ENCODE measurements at regions of chr18 and their contacts with region 1.

Region 1: GRCh38 chr18:54357660-54358494 is at the starts of genes C18orf54 and STARD6:
- DNase-seq: peak; percentile 88
- H3K4me3 ChIP-seq: peak within 1 kb of the TSS; percentile 88
- H3K27ac ChIP-seq: peak within 1 kb of the TSS; percentile 82
- H3K4me1 ChIP-seq: peaks cover 21% of the 10 kb centered on the region
- CTCF ChIP-seq: peak; percentile 65
- total RNA-seq, gene C18orf54: 4.9 and 5.4 TPM in 2 replicates
- total RNA-seq, gene STARD6: not detected in 2 replicates

Region 2: DNA sequence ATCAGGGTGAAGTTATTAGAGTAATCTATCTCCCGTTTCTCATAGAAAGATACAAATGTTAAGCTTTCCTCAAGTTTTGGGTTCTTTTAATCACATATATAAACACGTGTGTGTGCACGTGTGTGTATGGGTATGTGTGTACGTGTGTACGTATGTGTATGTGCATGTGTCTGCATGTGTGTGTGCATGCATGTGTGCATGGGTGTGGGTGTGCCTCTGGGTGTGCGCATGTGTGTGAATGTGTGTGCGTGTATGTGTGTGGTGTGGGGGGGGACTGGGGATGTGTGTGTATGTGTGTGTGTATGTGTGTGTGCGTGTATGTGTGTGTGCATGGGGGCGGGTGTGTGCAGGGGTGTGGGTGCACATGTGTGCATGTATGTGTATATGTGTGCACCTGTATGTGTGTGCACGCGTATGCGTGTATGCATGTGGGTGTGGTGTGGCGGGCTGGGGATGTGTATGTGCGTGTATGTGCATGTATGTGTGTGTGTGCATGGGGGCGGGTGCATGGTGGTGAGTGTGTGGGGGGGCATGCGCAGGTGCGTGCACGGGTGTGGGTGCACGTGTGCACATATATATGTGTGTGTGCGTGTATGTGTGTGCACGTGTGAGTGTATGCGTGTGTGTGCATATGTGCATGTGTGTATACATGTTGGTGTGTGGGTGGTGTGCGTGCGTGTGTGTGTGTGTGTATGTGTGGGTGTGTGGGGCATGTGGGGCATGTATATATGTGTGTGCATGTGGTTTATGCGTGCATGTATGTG is 437.4 kb before region 1 on chr18:
- CTCF ChIA-PET with region 1: no interaction called
- POLR2A ChIA-PET with region 1: no interaction called
- intact Hi-C with region 1: no loop called
- DNase-seq: no peak
- H3K4me3 ChIP-seq: no peak overlapping the region
- H3K27ac ChIP-seq: no peak overlapping the region
- H3K4me1 ChIP-seq: no peaks in the 10 kb centered on the region
- CTCF ChIP-seq: no peak

Region 3: DNA sequence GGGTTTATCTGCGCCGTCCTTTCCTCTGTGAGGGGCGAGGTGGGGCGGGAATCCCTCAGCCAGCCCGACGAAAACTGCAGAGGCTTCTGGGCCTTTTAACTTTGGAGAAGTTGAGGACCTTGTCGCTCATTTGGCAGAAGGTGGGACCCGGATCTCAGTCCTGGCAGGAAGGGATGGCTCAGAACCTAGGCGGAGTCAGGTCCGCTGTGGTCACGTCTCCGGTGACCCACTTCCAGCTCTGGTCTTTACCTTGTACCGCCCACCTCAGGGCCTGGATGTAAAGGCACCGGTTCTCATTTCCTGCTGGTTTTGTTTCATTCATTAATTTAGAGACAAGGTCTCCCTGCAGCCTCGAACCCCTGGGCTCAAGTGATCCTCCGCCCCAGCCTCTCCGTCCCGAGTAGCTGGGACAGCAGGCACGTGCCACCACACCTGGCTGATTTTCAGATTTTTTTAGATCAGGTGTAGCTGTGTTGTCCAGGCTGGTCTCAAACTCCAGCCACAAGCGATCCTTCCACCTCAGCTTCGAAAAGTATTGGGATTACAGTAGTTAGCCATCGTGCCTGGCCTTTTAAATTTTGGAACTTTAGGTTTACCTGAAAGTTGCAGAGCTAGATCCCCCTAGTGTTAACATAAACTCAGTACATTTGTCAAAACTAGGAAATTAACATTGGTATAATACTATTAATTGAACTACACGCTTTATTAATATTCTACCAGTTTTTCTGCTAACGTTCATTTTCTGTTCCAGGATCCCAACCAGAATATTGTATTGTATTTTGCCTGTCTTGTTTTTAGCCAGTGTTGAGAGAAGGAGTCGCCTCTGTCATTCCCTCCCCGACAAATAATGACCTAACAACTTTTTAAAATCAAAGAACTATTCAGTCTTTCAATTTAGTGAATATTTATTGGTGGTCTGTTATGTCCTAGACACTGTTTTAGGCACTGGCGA is 87.7 kb before region 1 on chr18:
- CTCF ChIA-PET with region 1: no interaction called
- POLR2A ChIA-PET with region 1: interaction called, 4 read pairs
- intact Hi-C with region 1: loop called (anchors 2 kb)
- DNase-seq: peak; percentile 56
- H3K4me3 ChIP-seq: peak overlapping the region; percentile 75
- H3K27ac ChIP-seq: peak overlapping the region; percentile 91
- H3K4me1 ChIP-seq: peaks cover 44% of the 10 kb centered on the region
- CTCF ChIP-seq: peak; percentile 74

Measured in OCI-LY7 (cell line).